PC-3 (cell line): ENCODE measurements at regions of chr1 and their contacts with region 1.

Region 1: GRCh38 chr1:32163405-32163804 is 16.1 kb upstream of the TXLNA start:
- DNase-seq: peak; percentile 71
- ATAC-seq: peak; percentile 53; the same call in 1 of the 2 replicates
- H3K4me3 ChIP-seq: no peak overlapping the region
- H3K27ac ChIP-seq: peak overlapping the region; percentile 35; the same call in 1 of the 2 replicates
- H3K4me1 ChIP-seq: peaks cover 11% of the 10 kb centered on the region
- H3K27me3 ChIP-seq: no peaks in the 10 kb centered on the region
- CTCF ChIP-seq: no peak

Region 2: GRCh38 chr1:32127409-32128198 is 35.8 kb before region 1 on chr1:
- CTCF ChIA-PET with region 1: no interaction called
- POLR2A ChIA-PET with region 1: interaction called, 14 read pairs
- intact Hi-C with region 1: no loop called
- DNase-seq: no peak
- ATAC-seq: no peak
- H3K4me3 ChIP-seq: no peak overlapping the region
- H3K27ac ChIP-seq: no peak overlapping the region
- H3K4me1 ChIP-seq: no peaks in the 10 kb centered on the region
- H3K27me3 ChIP-seq: no peaks in the 10 kb centered on the region
- CTCF ChIP-seq: 0 out of 2 replicates have a peak, but pooled peaks have one; percentile 20

Region 3: GRCh38 chr1:32580348-32581017 is 417.1 kb after region 1 on chr1:
- CTCF ChIA-PET with region 1: no interaction called
- POLR2A ChIA-PET with region 1: no interaction called
- intact Hi-C with region 1: no loop called
- DNase-seq: no peak
- ATAC-seq: no peak
- H3K4me3 ChIP-seq: no peak overlapping the region
- H3K27ac ChIP-seq: no peak overlapping the region
- H3K4me1 ChIP-seq: no peaks in the 10 kb centered on the region
- H3K27me3 ChIP-seq: no peaks in the 10 kb centered on the region
- CTCF ChIP-seq: no peak